ENCODE measurements at regions of chr11 and their contacts with region 1.

Region 1: DNA sequence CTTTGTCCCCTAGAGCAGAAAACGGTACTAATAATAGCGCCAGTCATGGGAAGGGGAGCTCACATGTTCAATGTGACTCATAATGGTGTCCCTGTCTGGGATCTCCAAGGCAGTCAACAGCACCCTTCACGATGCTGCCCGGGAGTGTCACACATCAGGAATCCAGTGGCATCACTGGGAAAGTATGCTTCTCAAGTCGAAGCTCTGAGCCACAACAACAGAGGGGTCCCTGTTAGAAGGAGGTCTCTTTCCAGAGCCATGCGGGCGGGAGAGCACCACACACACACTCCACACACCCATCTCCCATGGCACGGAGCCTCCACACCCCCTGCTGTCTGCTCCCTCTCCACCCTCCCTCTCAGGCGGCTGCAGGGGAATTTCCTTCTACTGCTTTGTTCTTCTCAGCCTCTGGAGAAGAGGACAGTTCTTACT is 119.7 kb downstream of the ETS1 start:
- DNase-seq: no peak
- ATAC-seq: no peak

Region 2: DNA sequence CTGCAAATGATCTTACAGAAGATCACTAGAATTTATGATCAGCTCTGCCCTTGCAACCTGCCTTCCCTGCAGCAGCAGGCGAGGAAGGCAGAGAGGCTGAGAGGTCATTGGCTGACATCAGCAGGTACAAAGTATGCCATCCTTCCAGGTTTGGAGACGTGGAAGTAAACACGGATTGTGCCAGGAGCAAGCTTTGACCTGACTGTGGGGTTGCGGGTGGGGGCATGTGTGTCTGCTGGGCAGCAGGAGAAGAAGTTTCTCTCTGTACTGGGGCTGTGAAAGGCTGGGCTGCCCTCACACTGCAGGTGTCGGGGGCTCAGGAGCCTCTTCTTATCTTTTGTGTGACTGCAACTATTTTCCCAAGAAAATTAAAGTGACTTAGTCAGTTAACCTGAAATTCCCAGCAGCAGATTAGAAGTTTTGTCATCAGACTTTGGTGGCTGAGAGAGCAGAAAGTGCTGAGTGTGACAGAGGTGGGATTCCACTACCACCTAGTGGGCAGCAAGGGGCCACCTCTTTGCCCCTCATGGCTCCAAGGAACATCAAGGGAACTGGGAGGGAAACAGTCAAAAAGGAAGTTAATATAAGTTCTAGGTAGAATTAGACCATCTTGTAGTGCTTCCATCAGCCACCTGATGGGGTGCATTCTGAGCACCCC is 446.1 kb before region 1 on chr11:
- intact Hi-C with region 1: loop called (anchors 10 kb)
- DNase-seq: no peak
- ATAC-seq: no peak

Region 3: DNA sequence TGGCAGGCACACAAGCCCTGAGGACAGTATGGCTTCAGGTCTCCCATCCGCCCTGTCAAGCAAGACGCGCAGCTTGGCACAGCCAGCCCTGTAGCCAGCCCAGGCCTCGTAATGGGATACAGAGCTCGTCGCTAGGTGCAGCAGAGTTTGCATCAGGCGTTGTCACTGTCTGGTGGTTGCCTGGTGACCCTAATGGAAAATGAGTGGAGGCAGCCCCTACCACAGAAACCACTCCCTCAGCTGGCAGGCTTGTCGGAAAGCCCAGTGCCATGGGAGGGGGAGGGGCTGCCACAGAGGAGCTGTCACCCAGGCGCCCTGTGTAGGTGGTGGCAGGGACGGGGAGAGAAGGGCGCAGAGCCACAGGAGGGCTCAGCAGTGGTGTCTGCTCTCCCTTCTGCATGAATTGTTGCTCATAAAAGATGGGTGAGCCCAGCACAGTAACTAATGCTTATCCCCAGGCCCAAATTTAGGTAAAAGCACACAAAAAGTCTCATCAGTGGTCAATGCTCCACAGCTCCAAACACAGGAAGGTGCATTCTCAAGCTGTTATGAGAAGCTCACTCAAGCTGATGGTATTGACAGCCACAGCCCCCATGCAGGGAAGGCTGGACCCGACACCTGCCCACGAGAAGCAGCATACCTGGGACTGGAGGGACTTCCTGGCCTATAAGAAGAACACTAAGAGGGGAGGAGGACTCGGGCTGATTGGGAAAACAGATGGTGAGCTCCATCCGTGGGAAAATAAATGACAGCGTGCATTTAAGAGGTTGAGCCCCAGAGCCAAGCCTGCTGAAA is 44.9 kb before region 1 on chr11:
- intact Hi-C with region 1: loop called (anchors 5 kb)
- DNase-seq: peak; percentile 75
- ATAC-seq: peak; percentile 58

Region 4: DNA sequence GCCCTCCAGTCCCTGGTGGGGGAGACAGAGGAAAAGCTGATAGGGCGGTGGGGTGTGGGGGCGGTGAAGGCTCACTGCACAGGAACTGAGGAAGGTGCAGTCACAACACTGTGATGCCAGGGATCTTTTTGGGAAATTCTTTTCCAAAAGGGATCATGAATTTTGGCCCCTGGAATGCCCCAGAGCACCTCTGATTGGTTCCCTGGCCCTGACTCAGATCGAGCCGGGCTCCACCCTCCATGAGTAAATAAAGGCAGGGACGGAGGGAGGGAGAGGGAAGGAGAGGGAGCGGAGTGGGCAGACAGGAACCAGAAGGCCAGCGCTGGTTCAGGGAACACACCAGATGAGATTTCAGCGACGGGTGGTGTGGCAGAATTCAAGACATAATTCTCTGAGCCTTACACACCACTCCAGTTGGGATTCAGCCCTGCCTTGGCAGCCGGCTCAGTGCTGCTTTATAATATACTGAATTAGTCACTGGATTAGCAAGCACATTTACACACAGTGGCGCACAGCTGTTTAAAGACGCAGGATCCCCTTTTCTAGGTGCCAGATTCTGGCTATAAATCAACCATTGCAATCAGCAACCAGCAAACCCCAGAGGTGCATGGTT is 39.5 kb after region 1 on chr11:
- intact Hi-C with region 1: loop called (anchors 5 kb)
- DNase-seq: peak; percentile 90
- ATAC-seq: peak; percentile 89

Region 5: DNA sequence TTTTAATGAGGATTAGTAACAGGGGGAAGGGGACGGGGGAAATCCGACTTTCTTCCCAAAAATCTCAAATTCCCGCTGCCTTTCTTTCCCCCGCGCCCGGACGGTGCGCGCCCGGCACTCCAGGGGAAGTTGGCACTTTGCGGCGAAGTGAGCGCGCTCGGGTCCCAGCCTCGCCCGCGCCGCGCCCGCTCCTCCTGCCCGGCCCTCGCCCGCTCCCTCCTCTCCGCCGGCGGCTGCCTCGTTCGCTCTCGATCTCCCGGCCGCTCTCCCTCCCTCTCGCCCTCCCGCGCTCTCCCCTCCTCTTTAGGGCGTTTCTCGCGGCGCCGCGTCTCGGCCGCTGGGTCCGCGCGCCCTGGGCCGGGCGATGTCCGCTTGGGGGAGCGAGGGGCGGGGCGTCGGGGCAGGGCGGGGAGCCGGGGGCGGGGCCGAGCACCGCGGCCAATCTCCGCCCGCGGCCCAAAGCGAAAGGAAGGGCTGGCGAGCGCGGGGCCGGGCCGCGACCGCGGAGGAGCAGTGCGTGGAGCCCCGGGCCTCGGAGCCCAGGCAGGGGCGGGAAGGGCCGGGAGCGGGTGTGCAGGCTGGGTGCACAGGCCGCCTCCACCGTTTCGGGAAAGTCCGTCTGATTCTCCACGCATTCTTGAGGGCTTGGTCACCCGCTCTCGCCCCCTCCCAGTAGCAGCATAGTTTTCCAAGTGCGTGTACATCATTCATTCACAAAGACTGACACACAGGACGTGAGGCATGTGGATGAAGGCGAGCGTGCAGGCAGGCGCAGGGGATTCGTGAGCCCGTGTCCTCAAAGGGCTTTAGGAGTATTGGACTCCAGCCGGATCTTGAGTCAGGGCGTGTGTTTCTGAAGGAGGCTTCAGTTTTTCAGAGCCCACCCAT is 54.7 kb after region 1 on chr11:
- intact Hi-C with region 1: loop called (anchors 5 kb)
- DNase-seq: peak; percentile 98
- ATAC-seq: peak; percentile 98

Region 6: GRCh38 chr11:128624269-128625175 is 156.9 kb after region 1 on chr11:
- intact Hi-C with region 1: loop called (anchors 5 kb)
- DNase-seq: no peak
- ATAC-seq: no peak